Ascending aorta (tissue), 2 donors: ENCODE measurements at regions of chr7 and their contacts with region 1.

Region 1: GRCh38 chr7:103148994-103149807 is at the start of gene NAPEPLD:
- DNase-seq: peak; percentile 58 to 94
- H3K4me3 ChIP-seq: peak within 1 kb of the TSS; percentile 79 to 81
- H3K27ac ChIP-seq: peak within 1 kb of the TSS; percentile 94 to 95
- H3K4me1 ChIP-seq: peaks cover 0 to 3% of the 10 kb centered on the region in 2 donors
- H3K27me3 ChIP-seq: no peaks in the 10 kb centered on the region
- CTCF ChIP-seq: no peak
- total RNA-seq, gene NAPEPLD: 19.4 TPM

Region 2: GRCh38 chr7:103074519-103075336 is 74.5 kb before region 1 on chr7 and contains the starts of genes ARMC10 and FBXL13:
- intact Hi-C with region 1: loop called (anchors 1 kb)
- DNase-seq: peak; percentile 55 to 95
- H3K4me3 ChIP-seq: peak within 1 kb of the TSS; percentile 81 to 92
- H3K27ac ChIP-seq: peak within 1 kb of the TSS; percentile 93 to 97
- H3K4me1 ChIP-seq: peaks cover 0 to 13% of the 10 kb centered on the region in 2 donors
- H3K27me3 ChIP-seq: no peaks in the 10 kb centered on the region
- CTCF ChIP-seq: peak; percentile 19 to 48 (median 41)
- total RNA-seq, gene ARMC10: 66.4 TPM
- total RNA-seq, gene FBXL13: 0.75 TPM

Region 3: GRCh38 chr7:103113164-103113563 is 36.0 kb before region 1 on chr7:
- intact Hi-C with region 1: loop called (anchors 5 kb)
- DNase-seq: peak in 1 of 2 donors; percentile 75
- H3K4me3 ChIP-seq: no peak overlapping the region
- H3K27ac ChIP-seq: peak overlapping the region in 1 of 2 donors; percentile 49
- H3K4me1 ChIP-seq: no peaks in the 10 kb centered on the region
- H3K27me3 ChIP-seq: no peaks in the 10 kb centered on the region
- CTCF ChIP-seq: no peak